Left ventricle myocardium inferior (tissue), 1 donor: ENCODE measurements at regions of chr3 and their contacts with region 1.

Region 1: DNA sequence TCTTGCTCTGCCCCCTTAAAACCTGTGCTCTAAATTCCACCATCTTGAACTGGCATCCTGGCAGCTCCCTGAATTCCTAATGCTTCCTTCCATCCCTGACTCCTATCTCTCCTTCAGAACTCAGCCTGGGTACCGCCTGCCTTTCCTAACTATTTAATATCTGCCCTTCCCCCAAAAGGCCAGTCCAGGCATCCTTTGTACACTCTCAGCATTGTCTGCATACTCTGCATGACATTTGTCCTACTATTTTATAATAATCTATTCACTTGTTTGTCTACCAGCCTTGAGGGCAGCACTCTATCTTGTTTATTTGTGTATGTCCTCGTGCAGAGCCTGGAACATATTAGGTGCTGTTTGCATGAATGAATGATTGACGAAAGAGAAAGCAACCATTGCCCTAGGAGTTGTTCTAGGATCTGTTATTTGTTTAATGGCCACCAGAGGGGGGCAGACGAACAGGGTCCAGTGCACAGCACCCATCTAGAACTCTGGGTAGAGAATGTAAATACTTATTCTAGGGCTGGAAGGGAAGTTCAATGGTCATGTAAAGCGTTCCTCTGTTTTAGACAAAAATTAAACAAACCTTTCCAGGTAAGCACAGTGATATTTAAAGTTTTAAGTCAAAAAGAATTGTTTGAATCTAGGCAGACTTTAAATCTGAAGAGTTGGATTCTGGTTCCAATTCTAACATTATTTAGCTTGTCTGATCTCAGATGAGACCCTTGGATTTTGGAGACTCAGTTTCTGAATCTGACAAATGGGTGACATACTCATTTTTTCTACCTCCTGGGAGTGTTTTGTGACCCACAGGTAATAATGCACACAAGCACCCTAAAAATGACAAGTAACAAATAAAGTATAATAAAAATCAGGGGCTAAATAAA is 125.8 kb upstream of the GALNT15 start:
- DNase-seq: no peak
- H3K4me3 ChIP-seq: peak overlapping the region; percentile 44
- H3K27ac ChIP-seq: no peak overlapping the region
- H3K4me1 ChIP-seq: peaks cover 25% of the 10 kb centered on the region
- H3K27me3 ChIP-seq: no peaks in the 10 kb centered on the region
- CTCF ChIP-seq: peak; percentile 87

Region 2: DNA sequence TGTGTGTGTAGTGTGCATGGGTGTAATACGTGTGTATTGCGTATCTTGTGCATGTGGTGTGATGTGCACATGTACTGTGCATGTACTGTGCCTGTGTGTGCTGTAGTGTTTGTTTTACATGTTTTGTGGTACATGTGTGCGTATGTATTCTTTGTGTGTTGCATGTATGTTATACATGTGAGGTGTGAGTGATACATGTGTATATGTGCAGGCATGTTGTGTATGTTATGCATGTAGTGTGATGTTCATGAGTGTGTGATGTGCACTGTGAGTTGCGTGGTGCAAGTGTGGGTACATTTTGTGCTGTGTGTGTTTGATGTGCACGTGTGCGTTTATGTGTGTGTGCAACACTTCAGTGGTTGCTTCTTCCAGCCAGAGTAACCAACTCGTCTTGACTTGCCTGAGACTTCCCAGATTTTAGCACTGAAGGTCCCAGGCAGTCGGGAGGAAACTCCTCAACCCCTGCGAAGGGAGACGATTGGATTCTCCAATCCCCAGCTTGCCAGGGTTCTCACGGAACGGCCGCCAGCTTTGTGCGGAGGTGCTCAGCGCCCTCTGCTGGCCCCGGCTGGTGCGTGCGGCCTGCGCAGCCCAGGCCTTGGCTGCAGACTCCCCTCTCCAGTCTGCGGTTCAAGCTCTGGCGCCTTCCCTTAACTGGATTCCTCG is 129.4 kb after region 1 on chr3:
- intact Hi-C with region 1: loop called (anchors 2 kb)
- DNase-seq: peak; percentile 83
- H3K4me3 ChIP-seq: peak overlapping the region; percentile 64
- H3K27ac ChIP-seq: peak overlapping the region; percentile 77
- H3K4me1 ChIP-seq: peaks cover 41% of the 10 kb centered on the region
- H3K27me3 ChIP-seq: peaks cover 4% of the 10 kb centered on the region
- CTCF ChIP-seq: peak; percentile 99

Region 3: GRCh38 chr3:16382845-16383244 is 334.2 kb after region 1 on chr3:
- intact Hi-C with region 1: no loop called
- DNase-seq: no peak
- H3K4me3 ChIP-seq: no peak overlapping the region
- H3K27ac ChIP-seq: no peak overlapping the region
- H3K4me1 ChIP-seq: peaks cover 32% of the 10 kb centered on the region
- H3K27me3 ChIP-seq: no peaks in the 10 kb centered on the region
- CTCF ChIP-seq: no peak